ENCODE measurements at regions of chr6 and their contacts with region 1.

Region 1: GRCh38 chr6:17086469-17086868 is 15.4 kb upstream of the STMND1 start:
- DNase-seq: peak; percentile 50
- H3K4me3 ChIP-seq: no peak overlapping the region
- H3K27ac ChIP-seq: no peak overlapping the region
- H3K27me3 ChIP-seq: no peaks in the 10 kb centered on the region
- CTCF ChIP-seq: peak; percentile 74

Region 2: DNA sequence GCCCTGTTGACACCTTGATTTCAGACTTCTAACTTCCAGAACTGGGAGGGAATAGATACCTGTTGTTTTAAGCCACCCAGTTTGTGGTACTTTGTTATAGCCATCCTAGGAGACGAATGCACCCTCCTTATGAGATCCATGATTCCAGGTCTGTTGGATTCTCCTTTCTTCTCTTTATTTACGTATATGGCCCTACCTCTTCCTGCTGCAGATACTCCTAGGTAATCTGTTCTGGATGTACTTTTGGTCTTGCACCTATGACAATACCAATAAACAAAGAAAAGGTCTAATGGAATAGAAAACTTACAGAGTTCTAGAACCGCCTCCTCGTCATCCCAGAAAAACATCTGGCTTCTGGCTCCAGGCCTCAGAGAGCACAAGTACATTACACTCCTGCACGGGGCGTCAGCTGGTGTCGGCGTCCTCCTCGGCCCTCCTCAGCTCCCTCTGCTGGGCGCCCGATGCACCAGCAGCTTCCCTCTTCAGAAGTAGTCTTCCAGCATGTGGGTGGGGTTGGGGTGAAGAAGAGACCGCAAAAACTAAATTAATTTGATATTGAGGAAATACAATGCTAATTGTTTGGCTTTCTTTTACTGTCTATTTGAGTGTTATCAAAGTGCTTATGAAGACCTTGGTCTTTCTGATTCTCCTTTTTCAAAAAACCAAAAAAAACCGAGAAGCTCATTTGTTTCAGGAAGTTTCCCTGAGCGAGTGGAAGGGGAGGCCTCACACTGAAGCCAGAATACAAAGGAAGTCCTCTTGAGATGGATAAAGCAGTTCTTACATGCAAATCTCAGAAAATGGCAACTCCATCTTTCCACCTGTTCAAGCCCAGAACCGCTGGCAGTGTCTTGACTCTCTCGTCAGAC is 315.5 kb before region 1 on chr6:
- CTCF ChIA-PET with region 1: interaction called, 98 read pairs
- POLR2A ChIA-PET with region 1: no interaction called
- DNase-seq: no peak
- H3K4me3 ChIP-seq: no peak overlapping the region
- H3K27ac ChIP-seq: peak overlapping the region; percentile 82
- H3K27me3 ChIP-seq: no peaks in the 10 kb centered on the region
- CTCF ChIP-seq: peak; percentile 87

Region 3: DNA sequence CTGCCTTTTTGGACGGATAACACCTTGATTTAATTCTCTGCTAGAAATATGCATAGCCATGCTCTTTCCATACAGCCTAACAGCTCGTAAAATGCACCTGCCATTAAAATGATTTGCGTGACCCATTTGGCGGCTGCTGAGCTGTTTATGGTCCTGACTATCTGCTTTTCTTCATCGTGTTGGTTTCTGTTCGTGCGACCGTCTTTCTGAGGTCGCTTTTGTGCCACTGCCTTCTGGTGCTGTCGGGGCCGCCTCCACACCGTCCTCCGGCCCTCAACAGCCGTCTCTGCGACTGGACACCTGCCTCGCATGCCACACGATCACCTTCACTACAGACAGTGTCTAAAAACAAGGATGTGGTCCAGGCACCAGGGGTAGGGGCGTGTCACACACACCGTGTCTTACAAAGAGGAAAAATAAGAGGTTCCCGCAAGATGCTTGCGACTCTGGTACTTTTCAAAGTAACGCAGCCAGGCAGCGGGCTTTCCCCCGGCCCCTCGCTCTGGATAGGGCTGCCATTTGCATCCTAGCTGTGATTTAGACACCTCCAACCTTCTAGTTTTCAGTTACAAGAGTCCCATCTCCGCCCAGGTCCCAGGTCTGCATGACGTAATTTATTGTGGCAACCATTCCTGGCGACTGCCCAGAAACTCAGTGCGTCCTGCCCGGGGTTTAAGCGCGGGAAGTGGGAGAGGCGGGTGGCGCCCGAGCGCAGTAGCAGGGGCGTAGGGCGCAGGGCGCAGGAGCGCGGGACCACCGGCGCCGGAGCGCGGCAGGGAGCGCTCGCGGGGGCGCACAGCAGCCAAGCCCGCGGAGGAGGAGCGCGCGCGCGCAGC is 15.2 kb after region 1 on chr6 and contains the start of gene STMND1:
- CTCF ChIA-PET with region 1: interaction called, 20 read pairs
- POLR2A ChIA-PET with region 1: interaction called, 8 read pairs
- DNase-seq: no peak
- H3K4me3 ChIP-seq: peak within 1 kb of the TSS; percentile 52
- H3K27ac ChIP-seq: no peak within 1 kb of the TSS
- H3K27me3 ChIP-seq: peaks cover 34% of the 10 kb centered on the region
- CTCF ChIP-seq: no peak
- polyA plus RNA-seq, gene STMND1: not detected in 2 replicates

Measured in AG04450 (cell line).